Aorta (tissue), 5 donors: ENCODE measurements at regions of chr1 and their contacts with region 1.

Region 1: GRCh38 chr1:60126723-60127122 is 53.2 kb upstream of the C1orf87 start:
- DNase-seq: no peak
- ATAC-seq: no peak
- H3K4me3 ChIP-seq: no peak overlapping the region
- H3K27ac ChIP-seq: no peak overlapping the region
- H3K4me1 ChIP-seq: no peaks in the 10 kb centered on the region
- H3K27me3 ChIP-seq: no peaks in the 10 kb centered on the region

Region 2: GRCh38 chr1:59971464-59971911 is 155.2 kb before region 1 on chr1:
- intact Hi-C with region 1: loop called in 1 of 2 experiments (anchors 5 kb)
- DNase-seq: peak; percentile 78 to 91
- ATAC-seq: peak; percentile 87
- H3K4me3 ChIP-seq: no peak overlapping the region
- H3K27ac ChIP-seq: no peak overlapping the region
- H3K4me1 ChIP-seq: no peaks in the 10 kb centered on the region
- H3K27me3 ChIP-seq: no peaks in the 10 kb centered on the region

Region 3: DNA sequence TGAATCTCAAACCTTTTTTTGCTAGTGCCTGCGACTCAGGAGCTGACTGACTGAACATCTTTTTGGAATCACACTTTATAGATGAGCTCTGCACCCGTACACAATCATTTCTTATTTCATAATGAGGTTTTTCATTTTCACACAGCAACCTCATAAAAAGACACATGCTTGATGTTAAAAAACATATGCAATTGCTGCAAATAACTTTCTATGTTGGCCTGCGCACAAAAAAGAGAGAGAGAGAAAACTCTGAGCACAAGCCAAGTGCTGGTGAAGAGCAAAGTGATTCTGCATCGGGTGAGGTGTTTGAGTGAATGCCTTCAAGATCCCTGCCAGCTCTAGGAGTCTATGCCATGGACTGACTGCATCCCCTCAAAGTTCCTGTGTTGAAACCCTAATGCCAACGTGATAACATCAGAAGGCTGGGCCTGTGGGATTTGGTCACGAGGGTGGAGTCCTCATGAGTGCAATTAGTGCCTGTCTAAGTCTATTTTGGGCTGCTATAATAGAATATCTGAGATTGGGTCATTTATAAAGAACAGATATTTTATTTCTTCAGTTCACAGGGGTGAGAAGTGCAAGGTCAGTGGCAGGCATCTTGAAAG is 89.8 kb before region 1 on chr1:
- intact Hi-C with region 1: no loop called
- DNase-seq: no peak
- ATAC-seq: no peak
- H3K4me3 ChIP-seq: no peak overlapping the region
- H3K27ac ChIP-seq: no peak overlapping the region
- H3K4me1 ChIP-seq: no peaks in the 10 kb centered on the region
- H3K27me3 ChIP-seq: no peaks in the 10 kb centered on the region

Region 4: GRCh38 chr1:60078182-60078581 is 48.5 kb before region 1 on chr1:
- intact Hi-C with region 1: loop called in 1 of 2 experiments (anchors 5 kb)
- DNase-seq: no peak
- ATAC-seq: no peak
- H3K4me3 ChIP-seq: no peak overlapping the region
- H3K27ac ChIP-seq: no peak overlapping the region
- H3K4me1 ChIP-seq: no peaks in the 10 kb centered on the region
- H3K27me3 ChIP-seq: no peaks in the 10 kb centered on the region

Region 5: GRCh38 chr1:60088620-60089155 is 38.0 kb before region 1 on chr1:
- intact Hi-C with region 1: no loop called
- DNase-seq: no peak
- ATAC-seq: no peak
- H3K4me3 ChIP-seq: no peak overlapping the region
- H3K27ac ChIP-seq: no peak overlapping the region
- H3K4me1 ChIP-seq: peaks cover 0 to 4% of the 10 kb centered on the region in 2 donors
- H3K27me3 ChIP-seq: no peaks in the 10 kb centered on the region